Ascending aorta (tissue), 2 donors: ENCODE measurements at regions of chr4 and their contacts with region 1.

Region 1: GRCh38 chr4:139633661-139634060 is 32.0 kb upstream of the MGST2 start:
- DNase-seq: no peak
- H3K4me3 ChIP-seq: peak overlapping the region; percentile 31 to 52
- H3K27ac ChIP-seq: no peak overlapping the region
- H3K4me1 ChIP-seq: no peaks in the 10 kb centered on the region
- H3K27me3 ChIP-seq: no peaks in the 10 kb centered on the region
- CTCF ChIP-seq: peak in 2 of 3 experiments; percentile 39 to 56

Region 2: DNA sequence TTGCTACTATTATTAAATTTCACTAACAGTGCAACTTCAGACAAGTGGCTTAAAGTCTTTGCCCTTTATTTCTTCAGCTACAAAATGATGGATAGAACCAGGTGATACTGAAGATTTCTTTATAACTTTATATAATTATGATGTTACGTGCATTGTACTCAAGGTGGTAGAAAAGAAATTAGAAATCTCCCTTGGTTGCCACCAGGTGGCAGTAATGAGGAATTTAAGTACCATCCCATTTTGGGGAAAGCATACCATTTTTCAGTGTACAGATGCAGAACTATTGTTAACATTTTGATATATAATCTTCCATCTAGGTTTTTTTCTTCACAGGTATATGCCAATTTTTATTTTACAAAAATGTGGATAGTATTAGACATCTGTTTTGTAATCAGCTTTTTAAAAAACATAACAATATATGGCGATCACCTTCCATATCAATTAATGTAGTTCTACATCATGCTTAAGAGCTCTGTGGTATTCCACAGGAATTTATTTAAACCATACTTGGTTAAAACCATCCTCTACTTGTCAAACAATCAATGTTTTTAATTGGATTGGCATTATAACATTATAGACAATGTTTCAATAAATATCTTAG is 217.5 kb before region 1 on chr4:
- intact Hi-C with region 1: loop called (anchors 5 kb)
- DNase-seq: no peak
- H3K4me3 ChIP-seq: no peak overlapping the region
- H3K27ac ChIP-seq: no peak overlapping the region
- H3K4me1 ChIP-seq: no peaks in the 10 kb centered on the region
- H3K27me3 ChIP-seq: no peaks in the 10 kb centered on the region
- CTCF ChIP-seq: peak in 2 of 3 experiments; percentile 48 to 60

Region 3: GRCh38 chr4:139501927-139502899 is 131.4 kb before region 1 on chr4:
- intact Hi-C with region 1: loop called (anchors 5 kb)
- DNase-seq: no peak
- H3K4me3 ChIP-seq: no peak overlapping the region
- H3K27ac ChIP-seq: no peak overlapping the region
- H3K4me1 ChIP-seq: no peaks in the 10 kb centered on the region
- H3K27me3 ChIP-seq: no peaks in the 10 kb centered on the region
- CTCF ChIP-seq: no peak